AG04449 (cell line): ENCODE measurements at regions of chr11 and their contacts with region 1.

Region 1: GRCh38 chr11:116787786-116788486 is at the start of gene ZPR1:
- DNase-seq: no peak
- H3K4me3 ChIP-seq: peak within 1 kb of the TSS; percentile 77
- CTCF ChIP-seq: no peak

Region 2: DNA sequence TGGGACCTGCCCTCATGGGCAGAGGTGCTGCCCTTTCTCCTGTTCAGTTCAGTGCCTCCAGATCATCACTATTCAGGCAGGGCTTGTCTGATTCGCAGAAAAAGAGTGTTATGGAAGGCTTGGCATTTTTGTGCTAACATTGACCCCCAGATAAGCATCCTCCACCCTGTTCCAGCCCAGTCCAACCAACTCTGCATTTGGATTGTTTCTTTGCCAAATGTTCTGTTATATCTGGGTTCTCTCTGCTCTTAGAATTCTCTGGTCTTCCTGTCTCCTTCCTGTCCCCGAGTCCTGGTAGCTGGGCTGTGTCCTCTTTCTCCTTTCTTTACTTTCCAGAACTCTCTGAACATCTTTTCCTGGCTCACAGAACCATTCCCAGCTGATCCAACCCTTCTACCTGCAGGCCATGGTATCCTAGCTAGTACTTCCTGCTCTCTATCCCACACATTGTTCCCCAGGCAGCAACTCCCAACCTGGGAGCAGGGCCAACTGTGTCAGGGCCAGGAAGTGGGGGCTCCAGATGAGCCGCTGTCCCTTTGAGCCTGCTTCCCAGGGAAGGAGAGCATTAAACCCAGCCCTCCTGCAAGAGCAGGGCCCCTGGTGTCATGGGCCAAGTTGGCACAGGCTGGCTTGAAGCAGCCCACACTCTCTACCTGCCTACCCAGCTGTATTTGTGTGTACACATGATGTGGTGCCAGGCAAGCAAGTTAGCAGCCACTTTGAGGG is 1003.0 kb before region 1 on chr11:
- CTCF ChIA-PET with region 1: no interaction called
- POLR2A ChIA-PET with region 1: no interaction called
- DNase-seq: no peak
- H3K4me3 ChIP-seq: no peak overlapping the region
- CTCF ChIP-seq: no peak

Region 3: DNA sequence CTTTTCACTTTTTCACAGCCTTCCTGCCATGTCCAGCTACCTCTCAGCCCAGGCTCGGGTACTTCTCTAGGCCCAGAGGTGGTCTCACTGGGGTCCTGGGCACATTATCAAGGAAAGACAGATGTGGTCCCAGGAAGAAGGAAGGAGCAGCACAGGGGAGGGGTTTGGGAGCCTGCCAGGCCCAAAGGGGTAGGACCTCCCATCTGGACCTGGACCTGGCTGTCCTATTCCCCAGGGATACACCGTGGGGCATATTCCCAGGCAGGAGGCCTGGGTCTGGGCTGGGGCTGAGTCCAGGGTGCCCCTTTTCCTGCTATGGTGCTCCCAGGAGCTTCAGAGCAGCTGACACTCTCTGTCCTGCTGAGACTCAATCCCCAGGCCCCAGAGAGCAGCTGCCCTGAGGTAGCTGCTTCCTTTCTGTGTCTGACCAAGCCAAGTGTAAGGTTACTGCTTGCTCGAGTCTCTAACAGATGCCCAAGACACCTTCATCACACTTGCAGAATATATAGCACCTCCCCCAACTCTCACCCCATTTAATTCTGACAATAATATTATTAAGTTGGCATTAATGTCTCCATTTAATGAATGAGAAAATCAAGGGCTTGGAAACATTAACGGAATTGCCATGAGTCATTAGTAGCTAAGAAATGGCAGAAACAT is 247.2 kb before region 1 on chr11:
- CTCF ChIA-PET with region 1: no interaction called
- POLR2A ChIA-PET with region 1: no interaction called
- DNase-seq: no peak
- H3K4me3 ChIP-seq: no peak overlapping the region
- CTCF ChIP-seq: no peak

Region 4: DNA sequence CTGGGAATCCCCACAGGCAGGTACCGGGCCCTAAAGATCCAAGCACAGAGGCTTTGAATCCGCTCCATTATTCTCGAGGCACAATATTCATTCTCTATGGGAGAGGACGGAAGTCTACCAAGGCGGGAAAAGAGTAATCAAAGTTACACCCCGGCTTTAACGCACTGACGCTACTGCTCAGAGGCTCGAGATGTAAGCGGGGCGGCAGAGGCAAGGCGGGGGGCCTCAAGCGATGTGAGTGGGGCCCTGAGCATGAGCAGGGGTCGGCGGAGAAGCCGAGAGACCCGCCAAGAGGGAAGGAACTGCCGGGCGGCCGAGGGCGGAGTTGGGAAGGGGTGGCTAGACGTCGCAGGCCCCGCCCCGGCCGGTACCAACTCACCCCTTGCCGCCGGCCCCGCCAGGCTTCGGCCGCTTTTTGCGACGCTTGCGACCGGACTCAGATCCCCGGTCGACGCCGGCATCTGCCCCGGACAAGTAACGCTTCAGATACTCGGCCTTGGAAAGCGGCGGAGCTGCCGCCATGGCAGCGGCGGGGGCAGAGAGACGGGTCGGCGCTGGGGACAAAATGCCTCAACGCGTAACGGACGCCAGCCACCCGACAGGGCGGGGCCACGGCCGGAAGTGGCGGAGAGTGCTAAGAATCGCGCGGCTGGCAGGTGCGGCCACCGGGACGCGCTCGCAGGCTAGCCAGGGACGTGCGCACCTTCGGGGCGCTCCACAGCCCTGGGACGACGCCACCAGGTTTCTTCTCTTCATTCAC is 15.3 kb before region 1 on chr11 and contains the start of gene BUD13:
- CTCF ChIA-PET with region 1: interaction called, 17 read pairs
- POLR2A ChIA-PET with region 1: interaction called, 6 read pairs
- DNase-seq: no peak
- H3K4me3 ChIP-seq: peak within 1 kb of the TSS; percentile 78
- CTCF ChIP-seq: no peak

Region 5: GRCh38 chr11:116813781-116814471 is 26.0 kb after region 1 on chr11:
- CTCF ChIA-PET with region 1: interaction called, 25 read pairs
- POLR2A ChIA-PET with region 1: no interaction called
- DNase-seq: no peak
- H3K4me3 ChIP-seq: no peak overlapping the region
- CTCF ChIP-seq: no peak

Region 6: DNA sequence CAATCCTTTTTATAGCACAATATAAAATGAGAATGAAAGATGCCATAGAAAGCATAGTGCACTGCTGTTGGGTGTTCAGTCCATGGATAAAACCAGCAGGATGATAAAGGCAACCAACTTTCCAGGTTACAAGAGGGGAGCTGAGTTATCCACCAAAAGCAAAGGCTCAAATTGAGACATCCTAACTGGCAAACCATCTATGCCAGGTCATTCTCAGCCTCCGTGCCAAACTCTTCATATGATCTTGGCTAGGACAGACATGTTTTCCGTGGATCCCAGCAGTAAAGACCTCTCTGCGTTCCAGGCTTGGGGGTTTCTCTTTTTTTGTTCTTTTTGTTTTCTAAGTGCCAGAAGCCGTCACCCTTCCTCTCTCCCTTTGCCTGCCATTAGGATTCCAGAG is 56.8 kb after region 1 on chr11:
- CTCF ChIA-PET with region 1: interaction called, 13 read pairs
- POLR2A ChIA-PET with region 1: no interaction called
- DNase-seq: no peak
- H3K4me3 ChIP-seq: no peak overlapping the region
- CTCF ChIP-seq: no peak

Region 7: DNA sequence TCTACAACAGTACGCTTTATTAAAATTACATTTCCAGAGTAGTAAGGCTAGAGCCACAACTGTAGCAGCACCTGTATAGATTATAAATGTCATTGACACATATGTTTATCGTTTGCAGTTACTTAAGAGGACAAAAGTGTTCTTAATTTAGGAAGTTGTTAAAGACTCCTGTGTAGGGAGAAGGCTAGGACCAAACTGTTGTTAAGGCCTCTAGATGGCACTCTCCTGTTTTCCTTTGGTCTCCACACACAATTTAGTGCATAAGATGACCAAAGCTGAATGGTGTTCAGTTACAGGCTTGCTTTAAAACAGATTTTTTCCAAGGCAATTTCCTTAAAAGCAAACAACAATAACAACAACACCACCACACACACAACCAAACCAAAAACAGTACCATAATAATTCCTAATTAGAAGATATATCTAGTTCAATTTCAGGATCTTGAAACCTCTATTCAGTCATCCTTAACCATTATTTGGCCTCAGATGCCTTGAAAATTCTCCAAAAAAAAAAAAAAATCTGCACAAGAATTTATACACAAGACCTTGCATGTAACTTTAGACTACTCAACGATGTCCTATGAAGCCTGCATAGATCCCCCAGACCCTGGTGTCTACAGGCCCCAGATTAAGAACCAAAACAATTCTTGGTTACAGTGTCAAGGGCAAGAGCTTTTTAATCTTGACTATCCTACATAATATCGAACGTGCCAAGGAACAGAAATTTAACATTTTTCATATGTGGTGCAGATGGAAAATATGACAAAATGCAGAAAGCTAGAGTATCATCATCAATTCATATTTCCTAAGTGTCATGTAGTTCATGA is 92.1 kb after region 1 on chr11:
- CTCF ChIA-PET with region 1: interaction called, 20 read pairs
- POLR2A ChIA-PET with region 1: no interaction called
- DNase-seq: no peak
- H3K4me3 ChIP-seq: no peak overlapping the region
- CTCF ChIP-seq: peak; percentile 76

Region 8: GRCh38 chr11:116938471-116939070 is 150.6 kb after region 1 on chr11:
- CTCF ChIA-PET with region 1: no interaction called
- POLR2A ChIA-PET with region 1: no interaction called
- DNase-seq: no peak
- H3K4me3 ChIP-seq: no peak overlapping the region
- CTCF ChIP-seq: no peak

Region 9: GRCh38 chr11:117127171-117127901 is 339.4 kb after region 1 on chr11:
- CTCF ChIA-PET with region 1: interaction called, 11 read pairs
- POLR2A ChIA-PET with region 1: no interaction called
- DNase-seq: no peak
- H3K4me3 ChIP-seq: no peak overlapping the region
- CTCF ChIP-seq: no peak